CD8-positive, alpha-beta T cell (primary cell): ENCODE measurements at regions of chr12 and their contacts with region 1.

Region 1: DNA sequence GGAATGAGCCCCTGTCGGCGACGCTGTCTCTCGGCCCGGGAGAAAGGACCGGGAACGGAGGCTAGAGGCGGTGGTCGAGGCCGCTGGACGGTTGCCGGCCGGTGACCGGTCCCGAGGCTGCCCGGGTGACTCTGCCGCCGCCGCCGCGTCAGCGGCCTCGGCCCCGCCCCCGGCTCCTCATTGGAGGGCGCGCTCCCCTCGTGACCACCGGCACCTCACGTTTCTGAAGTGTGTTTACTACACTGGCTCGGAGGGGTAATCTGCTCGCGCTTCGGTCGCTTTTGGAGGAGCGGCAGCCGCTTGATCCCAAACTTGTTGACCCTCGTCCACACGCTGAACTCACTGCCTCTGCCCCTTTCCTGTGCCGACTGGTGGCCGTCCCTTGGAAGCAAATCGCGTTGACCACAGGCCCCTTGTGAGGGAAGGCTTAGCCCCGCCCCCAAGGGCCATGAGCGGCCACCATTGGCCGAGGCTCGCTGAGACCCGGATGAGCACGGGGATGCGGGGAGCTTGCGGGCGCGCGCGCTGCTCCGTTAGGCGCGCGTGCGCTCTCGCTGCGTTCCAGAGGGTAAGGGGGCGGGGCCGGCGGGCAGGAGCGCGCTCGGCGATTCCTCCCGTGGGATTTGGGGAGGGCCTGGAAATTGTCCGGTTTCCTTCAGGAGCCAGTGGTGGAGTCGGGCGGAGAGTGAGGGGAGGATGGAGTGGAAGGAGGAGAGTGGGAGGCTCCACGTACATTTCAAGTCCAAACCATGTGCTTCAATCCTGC is at the start of gene CRY1:
- DNase-seq: peak; percentile 85 to 96 (median 92)
- ATAC-seq: peak; percentile 75
- H3K4me3 ChIP-seq: peak within 1 kb of the TSS; percentile 87 to 97
- H3K4me3 Mint-ChIP-seq: no peak within 1 kb of the TSS
- H3K27ac ChIP-seq: peak within 1 kb of the TSS; percentile 97 to 99
- H3K27ac Mint-ChIP-seq: no peak within 1 kb of the TSS
- H3K4me1 ChIP-seq: peaks cover 20% of the 10 kb centered on the region
- H3K4me1 Mint-ChIP-seq: peaks cover 16% of the 10 kb centered on the region
- H3K27me3 ChIP-seq: peaks cover 0 to 4% of the 10 kb centered on the region in 2 experiments
- H3K27me3 Mint-ChIP-seq: peaks cover 10% of the 10 kb centered on the region
- CTCF ChIP-seq: no peak
- total RNA-seq, gene CRY1: 80.8 to 83.0 TPM

Region 2: GRCh38 chr12:106223485-106224354 is 869.9 kb before region 1 on chr12:
- CTCF ChIA-PET with region 1: no interaction called
- POLR2A ChIA-PET with region 1: no interaction called
- intact Hi-C with region 1: loop called in 1 of 2 experiments (anchors 5 kb)
- DNase-seq: peak; percentile 49 to 82 (median 71)
- ATAC-seq: peak; percentile 63
- H3K4me3 ChIP-seq: no peak overlapping the region
- H3K4me3 Mint-ChIP-seq: no peak overlapping the region
- H3K27ac ChIP-seq: no peak overlapping the region
- H3K27ac Mint-ChIP-seq: no peak overlapping the region
- H3K4me1 ChIP-seq: peaks cover 18% of the 10 kb centered on the region
- H3K4me1 Mint-ChIP-seq: peaks cover 18% of the 10 kb centered on the region
- H3K27me3 ChIP-seq: no peaks in the 10 kb centered on the region
- H3K27me3 Mint-ChIP-seq: peaks cover 6% of the 10 kb centered on the region
- CTCF ChIP-seq: peak; percentile 90

Region 3: GRCh38 chr12:106357549-106358395 is 735.8 kb before region 1 on chr12 and contains the start of gene POLR3B:
- CTCF ChIA-PET with region 1: no interaction called
- POLR2A ChIA-PET with region 1: no interaction called
- intact Hi-C with region 1: loop called in 1 of 2 experiments (anchors 1 kb)
- DNase-seq: peak; percentile 93 to 98 (median 96)
- ATAC-seq: peak; percentile 92
- H3K4me3 ChIP-seq: peak within 1 kb of the TSS; percentile 97
- H3K4me3 Mint-ChIP-seq: peak within 1 kb of the TSS; percentile 91
- H3K27ac ChIP-seq: peak within 1 kb of the TSS; percentile 84 to 90
- H3K27ac Mint-ChIP-seq: peak within 1 kb of the TSS; percentile 90
- H3K4me1 ChIP-seq: peaks cover 13% of the 10 kb centered on the region
- H3K4me1 Mint-ChIP-seq: peaks cover 18% of the 10 kb centered on the region
- H3K27me3 ChIP-seq: no peaks in the 10 kb centered on the region
- H3K27me3 Mint-ChIP-seq: no peaks in the 10 kb centered on the region
- CTCF ChIP-seq: peak; percentile 79
- total RNA-seq, gene POLR3B: 2.5 to 2.6 TPM

Region 4: DNA sequence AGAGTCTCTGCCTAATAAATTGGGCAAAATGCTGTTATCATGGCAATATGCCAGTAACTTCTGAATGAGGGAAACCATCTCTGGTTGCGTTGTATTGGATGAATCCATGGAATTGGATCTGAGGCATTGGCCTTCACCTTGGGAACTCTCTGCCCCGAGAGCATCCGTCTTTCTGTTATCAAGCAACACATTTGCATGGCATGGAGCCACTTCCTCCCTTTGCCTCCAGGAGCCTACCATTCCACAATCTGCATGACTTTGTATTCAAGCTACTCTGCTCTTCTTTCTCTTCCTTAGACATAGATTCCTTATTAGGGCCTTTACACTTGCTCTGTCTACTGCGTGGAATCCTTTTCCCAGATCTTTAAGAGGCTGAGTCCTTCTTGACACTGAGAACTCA is 261.9 kb before region 1 on chr12:
- CTCF ChIA-PET with region 1: no interaction called
- POLR2A ChIA-PET with region 1: no interaction called
- intact Hi-C with region 1: no loop called
- DNase-seq: no peak
- ATAC-seq: no peak
- H3K4me3 ChIP-seq: no peak overlapping the region
- H3K4me3 Mint-ChIP-seq: no peak overlapping the region
- H3K27ac ChIP-seq: no peak overlapping the region
- H3K27ac Mint-ChIP-seq: no peak overlapping the region
- H3K4me1 ChIP-seq: no peaks in the 10 kb centered on the region
- H3K4me1 Mint-ChIP-seq: no peaks in the 10 kb centered on the region
- H3K27me3 ChIP-seq: no peaks in the 10 kb centered on the region
- H3K27me3 Mint-ChIP-seq: no peaks in the 10 kb centered on the region
- CTCF ChIP-seq: no peak

Region 5: DNA sequence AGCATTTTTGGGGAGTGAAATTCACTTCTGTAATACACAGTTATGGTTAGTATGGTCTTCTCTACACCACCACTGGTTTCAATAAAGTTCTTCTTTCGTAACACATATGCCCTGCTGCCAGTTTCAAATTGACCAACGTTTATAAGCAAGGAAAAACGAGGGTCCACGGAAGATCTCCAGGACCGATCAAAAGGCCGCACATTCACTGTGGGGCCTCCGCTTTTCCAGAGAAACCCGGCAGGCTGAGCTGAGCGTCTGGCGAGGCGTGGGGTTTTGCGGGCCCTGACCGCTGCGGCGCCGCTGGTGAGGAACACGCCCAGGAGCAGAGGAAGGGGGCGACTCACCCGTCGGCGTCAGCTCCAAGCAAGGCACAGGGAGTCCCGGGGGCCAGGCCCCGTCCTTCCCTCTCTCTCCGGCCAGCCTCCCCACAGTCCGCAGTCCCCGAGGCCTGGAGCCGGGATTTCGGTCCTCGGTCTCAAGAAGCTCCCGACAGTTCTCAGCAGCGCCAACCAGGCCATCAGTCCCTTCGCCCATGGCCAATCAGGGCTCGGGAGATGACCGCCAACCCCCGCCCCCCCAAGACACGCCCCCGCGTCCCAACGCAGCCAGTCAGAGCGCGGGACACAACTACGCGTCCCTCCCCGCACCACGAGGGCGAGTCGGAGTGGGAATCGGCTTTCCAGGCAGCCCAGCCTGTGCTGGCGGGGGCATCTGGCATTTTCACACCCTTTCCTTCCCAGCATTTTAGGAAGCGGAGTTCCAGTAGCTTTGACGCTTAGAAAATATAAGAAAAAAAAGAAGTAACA is 106.8 kb before region 1 on chr12 and contains the start of gene MTERF2:
- CTCF ChIA-PET with region 1: no interaction called
- POLR2A ChIA-PET with region 1: no interaction called
- intact Hi-C with region 1: loop called (anchors 2 kb)
- DNase-seq: peak; percentile 55 to 91 (median 76)
- ATAC-seq: peak; percentile 97
- H3K4me3 ChIP-seq: peak within 1 kb of the TSS; percentile 89 to 99
- H3K4me3 Mint-ChIP-seq: peak within 1 kb of the TSS; percentile 94
- H3K27ac ChIP-seq: peak within 1 kb of the TSS; percentile 61 to 75
- H3K27ac Mint-ChIP-seq: peak within 1 kb of the TSS; percentile 85
- H3K4me1 ChIP-seq: peaks cover 16% of the 10 kb centered on the region
- H3K4me1 Mint-ChIP-seq: peaks cover 43% of the 10 kb centered on the region
- H3K27me3 ChIP-seq: no peaks in the 10 kb centered on the region
- H3K27me3 Mint-ChIP-seq: no peaks in the 10 kb centered on the region
- CTCF ChIP-seq: no peak
- total RNA-seq, gene MTERF2: 3.1 to 4.1 TPM

Region 6: DNA sequence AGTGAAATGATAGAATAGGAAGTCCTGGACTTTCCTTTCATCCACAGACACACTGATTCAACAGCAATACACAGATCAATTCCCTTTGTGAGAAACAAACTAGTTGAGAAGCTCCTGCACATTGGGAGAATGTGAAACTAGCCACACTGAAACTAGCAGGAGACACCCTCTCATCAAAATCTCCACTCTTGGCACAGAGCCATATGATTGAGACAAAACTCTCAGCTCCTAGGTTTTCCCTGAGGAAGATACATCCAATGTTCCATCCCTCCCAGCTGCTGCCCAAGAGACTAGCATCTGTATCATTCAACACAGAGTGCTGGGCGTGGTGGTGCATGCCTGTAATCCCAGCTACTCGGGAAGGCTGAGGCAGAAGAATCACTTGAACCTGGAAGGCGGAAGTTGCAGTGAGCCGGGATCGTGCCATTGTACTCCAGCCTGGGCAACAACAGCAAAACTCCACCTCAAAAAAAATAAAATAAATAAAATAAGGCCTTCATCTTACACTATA is 54.9 kb before region 1 on chr12:
- CTCF ChIA-PET with region 1: no interaction called
- POLR2A ChIA-PET with region 1: no interaction called
- intact Hi-C with region 1: no loop called
- DNase-seq: no peak
- ATAC-seq: no peak
- H3K4me3 ChIP-seq: no peak overlapping the region
- H3K4me3 Mint-ChIP-seq: no peak overlapping the region
- H3K27ac ChIP-seq: no peak overlapping the region
- H3K27ac Mint-ChIP-seq: no peak overlapping the region
- H3K4me1 ChIP-seq: no peaks in the 10 kb centered on the region
- H3K4me1 Mint-ChIP-seq: peaks cover 20% of the 10 kb centered on the region
- H3K27me3 ChIP-seq: no peaks in the 10 kb centered on the region
- H3K27me3 Mint-ChIP-seq: no peaks in the 10 kb centered on the region
- CTCF ChIP-seq: no peak

Region 7: GRCh38 chr12:107122452-107122958 is 28.9 kb after region 1 on chr12:
- CTCF ChIA-PET with region 1: no interaction called
- POLR2A ChIA-PET with region 1: no interaction called
- intact Hi-C with region 1: no loop called
- DNase-seq: no peak
- ATAC-seq: no peak
- H3K4me3 ChIP-seq: no peak overlapping the region
- H3K4me3 Mint-ChIP-seq: no peak overlapping the region
- H3K27ac ChIP-seq: no peak overlapping the region
- H3K27ac Mint-ChIP-seq: no peak overlapping the region
- H3K4me1 ChIP-seq: no peaks in the 10 kb centered on the region
- H3K4me1 Mint-ChIP-seq: no peaks in the 10 kb centered on the region
- H3K27me3 ChIP-seq: no peaks in the 10 kb centered on the region
- H3K27me3 Mint-ChIP-seq: peaks cover 22% of the 10 kb centered on the region
- CTCF ChIP-seq: no peak

Region 8: DNA sequence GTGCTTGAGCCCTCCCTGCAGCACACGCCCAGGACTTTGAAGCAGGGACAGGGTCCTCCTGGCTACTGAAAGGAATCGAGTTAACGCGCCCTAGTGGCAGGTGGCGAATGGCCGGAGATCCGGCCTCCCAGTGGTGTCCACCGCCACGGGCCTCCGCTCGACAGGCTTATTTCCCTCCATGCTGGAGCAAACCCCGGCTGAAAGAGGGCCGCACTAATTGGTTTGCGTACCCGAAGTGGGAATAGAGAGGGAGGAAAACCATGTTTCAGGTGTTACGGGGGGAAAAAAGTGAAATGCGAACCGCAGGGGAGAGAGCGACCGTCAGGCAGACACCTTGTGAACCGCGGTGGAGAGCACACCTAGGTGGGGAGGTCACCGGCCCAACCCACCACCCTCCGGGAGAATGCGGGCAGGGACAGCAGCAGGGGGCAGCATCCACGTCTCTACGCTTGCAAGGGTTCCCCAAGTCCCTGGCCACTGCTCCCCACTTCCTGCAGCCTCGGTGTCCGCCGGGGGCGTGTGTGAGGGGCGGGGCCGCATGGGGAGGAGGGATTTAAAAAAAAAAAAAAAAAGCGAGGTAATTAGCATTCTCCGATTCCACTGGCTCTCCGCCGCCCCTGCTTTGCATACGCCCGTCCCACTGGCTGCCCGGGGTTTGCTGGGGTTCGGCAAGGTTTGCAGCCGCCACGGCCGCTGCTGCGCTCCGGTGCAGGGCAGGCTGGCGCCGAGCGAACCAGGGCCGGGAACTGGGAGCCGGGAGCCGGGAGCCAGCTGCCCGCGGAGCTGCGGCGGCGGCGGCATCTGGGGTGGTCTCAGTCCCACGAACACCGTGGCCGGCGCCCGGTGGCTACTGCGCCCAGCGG is 224.4 kb after region 1 on chr12:
- CTCF ChIA-PET with region 1: interaction called, 3 read pairs
- POLR2A ChIA-PET with region 1: interaction called, 4 read pairs
- intact Hi-C with region 1: loop called (anchors 1 to 2 kb)
- DNase-seq: peak; percentile 69 to 93 (median 86)
- ATAC-seq: peak; percentile 53
- H3K4me3 ChIP-seq: peak overlapping the region; percentile 69 to 74
- H3K4me3 Mint-ChIP-seq: peak overlapping the region; percentile 87
- H3K27ac ChIP-seq: peak overlapping the region; percentile 23 to 81
- H3K27ac Mint-ChIP-seq: peak overlapping the region; percentile 49
- H3K4me1 ChIP-seq: peaks cover 23% of the 10 kb centered on the region
- H3K4me1 Mint-ChIP-seq: peaks cover 36% of the 10 kb centered on the region
- H3K27me3 ChIP-seq: no peaks in the 10 kb centered on the region
- H3K27me3 Mint-ChIP-seq: no peaks in the 10 kb centered on the region
- CTCF ChIP-seq: peak; percentile 48

Region 9: DNA sequence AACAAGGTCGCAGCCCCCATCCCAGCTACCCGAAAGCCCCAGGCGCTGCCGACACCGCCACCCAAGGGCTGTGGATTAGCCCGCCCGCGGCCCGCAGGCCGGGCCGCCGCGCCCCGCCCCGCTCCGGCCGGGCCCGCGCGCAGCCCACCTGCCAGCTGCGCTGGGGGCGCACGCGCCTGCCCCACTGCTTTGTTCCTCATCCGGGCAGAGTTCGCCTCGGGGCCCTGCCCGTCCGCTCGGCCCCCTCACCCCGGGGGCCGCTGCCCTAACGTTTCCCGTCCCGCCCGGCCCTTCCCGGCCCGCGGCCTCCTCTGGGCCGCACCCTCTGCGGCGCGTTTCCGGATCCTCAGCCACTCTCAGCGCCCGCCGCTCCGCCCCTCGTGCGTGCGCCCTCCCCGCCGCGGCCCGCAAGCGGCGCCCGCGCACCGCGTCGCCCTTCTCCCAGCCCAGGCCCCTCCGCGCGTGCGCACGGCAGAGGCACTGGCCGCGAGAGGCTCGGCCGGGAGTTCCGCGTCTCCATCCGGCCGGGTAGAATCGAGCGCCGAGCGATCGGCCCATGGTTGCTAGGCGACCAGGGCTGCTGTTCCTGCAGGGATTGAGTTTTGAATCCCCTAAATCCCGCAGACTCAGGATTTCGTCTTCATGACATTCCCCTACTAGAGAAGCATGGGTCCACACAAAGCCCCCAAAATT is 667.4 kb after region 1 on chr12 and contains the start of gene PRDM4:
- CTCF ChIA-PET with region 1: no interaction called
- POLR2A ChIA-PET with region 1: no interaction called
- intact Hi-C with region 1: loop called in 1 of 2 experiments (anchors 5 kb)
- DNase-seq: peak; percentile 76 to 97 (median 88)
- ATAC-seq: peak; percentile 95
- H3K4me3 ChIP-seq: peak within 1 kb of the TSS; percentile 76 to 82
- H3K4me3 Mint-ChIP-seq: peak within 1 kb of the TSS; percentile 89
- H3K27ac ChIP-seq: peak within 1 kb of the TSS; percentile 80 to 83
- H3K27ac Mint-ChIP-seq: peak within 1 kb of the TSS; percentile 90
- H3K4me1 ChIP-seq: peaks cover 31% of the 10 kb centered on the region
- H3K4me1 Mint-ChIP-seq: peaks cover 44% of the 10 kb centered on the region
- H3K27me3 ChIP-seq: no peaks in the 10 kb centered on the region
- H3K27me3 Mint-ChIP-seq: no peaks in the 10 kb centered on the region
- CTCF ChIP-seq: no peak
- total RNA-seq, gene PRDM4: 44.9 to 46.0 TPM

Region 10: GRCh38 chr12:109052414-109053323 is 1959.1 kb after region 1 on chr12 and contains the start of gene USP30:
- CTCF ChIA-PET with region 1: no interaction called
- POLR2A ChIA-PET with region 1: no interaction called
- intact Hi-C with region 1: loop called in 1 of 2 experiments (anchors 5 kb)
- DNase-seq: peak; percentile 73 to 93 (median 85)
- ATAC-seq: peak; percentile 74
- H3K4me3 ChIP-seq: peak within 1 kb of the TSS; percentile 85 to 90
- H3K4me3 Mint-ChIP-seq: peak within 1 kb of the TSS; percentile 89
- H3K27ac ChIP-seq: peak within 1 kb of the TSS; percentile 68 to 91
- H3K27ac Mint-ChIP-seq: peak within 1 kb of the TSS; percentile 96
- H3K4me1 ChIP-seq: peaks cover 7% of the 10 kb centered on the region
- H3K4me1 Mint-ChIP-seq: peaks cover 21% of the 10 kb centered on the region
- H3K27me3 ChIP-seq: no peaks in the 10 kb centered on the region
- H3K27me3 Mint-ChIP-seq: no peaks in the 10 kb centered on the region
- CTCF ChIP-seq: no peak
- total RNA-seq, gene USP30: 28.2 to 33.1 TPM